Panc1 (cell line): ENCODE measurements at regions of chr22 and their contacts with region 1.

Region 1: DNA sequence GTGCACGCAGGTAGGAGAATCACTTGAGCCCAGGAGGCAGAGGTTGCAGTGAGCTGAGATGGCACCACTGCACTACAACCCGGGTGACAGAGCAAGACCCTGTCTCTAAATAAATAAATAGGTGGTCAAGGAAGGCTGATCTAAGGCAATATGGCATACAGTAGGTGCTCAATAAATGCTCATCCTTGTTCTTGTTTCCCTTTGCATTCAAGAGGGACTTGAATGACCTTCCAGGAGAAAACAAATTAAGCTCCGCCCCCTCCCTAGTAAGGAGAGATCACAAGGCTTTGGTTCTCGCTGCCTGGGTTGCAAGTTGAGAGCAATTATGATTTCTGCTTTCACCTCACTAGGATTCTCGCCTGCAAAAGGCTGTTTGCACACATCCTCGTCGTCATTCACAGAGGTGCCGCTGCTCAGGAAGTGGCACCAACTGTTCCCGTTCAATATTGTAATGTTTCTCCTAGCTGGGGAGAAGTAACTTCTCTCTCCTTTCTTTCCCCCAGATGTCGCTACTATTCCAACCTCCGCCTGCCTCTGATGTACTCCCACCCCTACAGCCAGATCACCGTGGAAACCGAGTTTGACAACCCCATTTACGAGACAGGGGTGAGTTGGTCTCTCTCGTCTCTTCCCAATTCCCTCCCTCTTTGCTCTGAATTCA is 51.8 kb upstream of the ASPHD2 start:
- DNase-seq: no peak
- ATAC-seq: no peak
- H3K4me3 ChIP-seq: no peak overlapping the region
- H3K27ac ChIP-seq: no peak overlapping the region
- H3K4me1 ChIP-seq: no peaks in the 10 kb centered on the region; the same call in 1 of the 2 replicates
- H3K27me3 ChIP-seq: 0 out of 2 replicates have a peak, but pooled peaks cover under 1% of the 10 kb centered on the region
- CTCF ChIP-seq: peak; percentile 22

Region 2: DNA sequence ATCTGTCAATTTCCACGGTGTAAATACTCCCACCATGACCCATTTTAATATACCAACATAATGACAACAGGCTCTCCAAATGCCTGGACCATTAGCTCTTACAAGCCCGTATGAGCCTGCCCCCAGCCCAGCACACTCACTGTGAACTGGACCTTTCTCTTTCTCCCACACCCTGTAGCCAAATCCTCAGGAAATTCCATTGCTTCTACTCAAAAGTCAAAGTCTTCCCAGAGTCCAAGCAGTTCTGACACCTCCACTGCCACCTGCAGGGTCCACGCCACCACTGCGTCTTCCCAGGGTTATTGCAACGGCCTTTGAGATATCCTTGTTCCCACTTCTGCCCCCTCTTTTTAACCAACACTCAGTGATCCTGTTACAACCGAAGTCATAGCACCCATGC is 58.3 kb before region 1 on chr22:
- CTCF ChIA-PET with region 1: no interaction called
- POLR2A ChIA-PET with region 1: no interaction called
- in situ Hi-C with region 1: no loop called
- intact Hi-C with region 1: loop called (anchors 10 kb)
- DNase-seq: no peak
- ATAC-seq: no peak
- H3K4me3 ChIP-seq: no peak overlapping the region
- H3K27ac ChIP-seq: no peak overlapping the region
- H3K4me1 ChIP-seq: no peaks in the 10 kb centered on the region
- H3K27me3 ChIP-seq: no peaks in the 10 kb centered on the region; the same call in 1 of the 2 replicates
- CTCF ChIP-seq: no peak

Region 3: DNA sequence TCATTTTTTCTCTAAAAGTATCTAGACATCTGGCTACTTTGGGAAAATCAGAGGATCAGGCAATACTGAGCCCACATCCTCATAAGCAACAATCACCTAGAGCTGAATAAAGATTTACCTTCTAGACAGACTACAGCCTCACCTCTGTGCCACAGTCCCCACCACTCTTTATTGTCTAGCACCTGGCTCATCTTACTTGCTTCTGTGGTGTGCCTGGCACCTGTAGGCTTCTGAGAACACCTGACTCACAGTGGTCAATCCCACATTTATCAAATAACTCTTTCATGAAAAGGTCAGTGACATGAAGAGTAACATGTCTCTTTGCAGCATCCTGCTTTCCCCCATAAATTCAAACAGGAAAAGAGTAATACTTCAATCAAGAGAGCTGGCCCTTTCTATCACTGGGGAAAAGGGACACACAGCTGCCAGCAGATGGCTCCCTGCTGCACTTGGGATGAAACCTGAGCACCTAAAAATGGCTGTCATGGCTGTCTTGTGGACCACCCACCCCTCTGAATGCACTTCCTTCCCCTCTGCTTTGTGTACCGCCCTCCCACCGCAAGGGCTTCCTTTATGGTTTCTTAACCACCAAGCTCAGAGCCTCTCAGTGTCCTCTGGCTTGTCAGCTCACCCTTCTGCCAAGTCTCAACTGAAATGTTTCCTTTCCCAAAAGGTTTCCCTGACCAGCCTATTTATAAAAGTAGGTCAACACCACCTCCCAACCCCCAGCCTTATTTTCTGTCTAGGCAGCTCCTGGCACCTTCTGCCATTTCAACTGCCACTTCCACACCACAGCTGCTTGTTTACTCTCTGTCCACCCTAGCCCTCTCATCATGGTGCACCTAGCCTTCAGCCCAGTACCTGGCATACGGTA is 125.6 kb after region 1 on chr22:
- CTCF ChIA-PET with region 1: no interaction called
- POLR2A ChIA-PET with region 1: no interaction called
- in situ Hi-C with region 1: no loop called
- intact Hi-C with region 1: no loop called
- DNase-seq: no peak
- ATAC-seq: 0 out of 2 replicates have a peak, but pooled peaks have one; percentile 60
- H3K4me3 ChIP-seq: no peak overlapping the region
- H3K27ac ChIP-seq: no peak overlapping the region
- H3K4me1 ChIP-seq: no peaks in the 10 kb centered on the region
- H3K27me3 ChIP-seq: no peaks in the 10 kb centered on the region
- CTCF ChIP-seq: peak; percentile 68